Activated B cell treated with CpG ODN at 0.5 μM for 24 hours (primary cell): ENCODE measurements at regions of chr1 and their contacts with region 1.

Region 1: GRCh38 chr1:222713091-222713961 is 962 bp downstream of the BROX start:
- DNase-seq: peak; percentile 90
- ATAC-seq: peak; percentile 73
- H3K4me3 Mint-ChIP-seq: peak overlapping the region; percentile 93
- H3K27ac Mint-ChIP-seq: peak overlapping the region; percentile 100
- H3K4me1 Mint-ChIP-seq: peaks cover 54% of the 10 kb centered on the region
- H3K27me3 Mint-ChIP-seq: no peaks in the 10 kb centered on the region
- CTCF ChIP-seq: no peak

Region 2: DNA sequence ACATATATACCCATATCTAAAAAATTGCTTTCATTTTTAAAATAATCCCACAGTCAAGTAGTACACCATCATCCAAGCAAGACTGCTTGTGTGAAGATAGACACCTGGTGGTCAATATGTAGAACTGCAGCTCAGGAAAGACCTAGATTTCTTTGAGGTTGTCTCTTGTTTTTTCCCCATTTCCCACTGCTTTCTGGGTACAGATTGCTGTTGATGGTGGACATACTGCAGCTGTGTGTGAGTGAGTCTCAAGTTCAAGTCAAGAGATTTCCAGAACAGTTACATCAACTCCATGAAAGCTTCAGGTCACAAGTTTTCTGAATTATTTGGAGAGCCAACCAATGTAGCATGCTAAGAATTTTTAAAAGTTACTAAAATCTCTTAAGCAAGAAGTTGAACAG is 1277.8 kb before region 1 on chr1:
- CTCF ChIA-PET with region 1: no interaction called
- POLR2A ChIA-PET with region 1: no interaction called
- intact Hi-C with region 1: loop called (anchors 5 kb)
- DNase-seq: no peak
- ATAC-seq: peak; percentile 27
- H3K4me3 Mint-ChIP-seq: no peak overlapping the region
- H3K27ac Mint-ChIP-seq: no peak overlapping the region
- H3K4me1 Mint-ChIP-seq: peaks cover 26% of the 10 kb centered on the region
- H3K27me3 Mint-ChIP-seq: peaks cover 4% of the 10 kb centered on the region
- CTCF ChIP-seq: peak; percentile 29

Region 3: DNA sequence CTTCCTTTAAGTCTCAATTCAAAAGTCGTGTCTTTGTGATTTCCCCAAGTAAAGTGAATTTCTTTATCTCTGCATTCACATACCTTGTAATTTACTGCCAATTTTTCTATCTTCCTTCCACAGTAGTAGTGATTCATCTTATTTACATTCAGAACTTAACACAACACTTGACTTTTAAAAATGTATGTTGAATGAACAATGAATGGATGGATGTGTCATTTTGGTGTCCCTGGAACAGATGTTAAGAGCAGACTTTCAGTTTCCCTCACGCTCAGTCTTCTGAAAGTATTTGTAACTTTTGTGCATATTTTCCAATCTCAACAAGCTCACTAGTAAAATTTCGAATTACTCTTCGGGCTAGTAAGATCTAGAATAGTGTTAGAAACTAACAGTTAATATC is 517.5 kb before region 1 on chr1:
- CTCF ChIA-PET with region 1: no interaction called
- POLR2A ChIA-PET with region 1: no interaction called
- intact Hi-C with region 1: no loop called
- DNase-seq: no peak
- ATAC-seq: no peak
- H3K4me3 Mint-ChIP-seq: no peak overlapping the region
- H3K27ac Mint-ChIP-seq: no peak overlapping the region
- H3K4me1 Mint-ChIP-seq: no peaks in the 10 kb centered on the region
- H3K27me3 Mint-ChIP-seq: no peaks in the 10 kb centered on the region
- CTCF ChIP-seq: no peak

Region 4: GRCh38 chr1:222582099-222582774 is 131.1 kb before region 1 on chr1:
- CTCF ChIA-PET with region 1: no interaction called
- POLR2A ChIA-PET with region 1: no interaction called
- intact Hi-C with region 1: no loop called
- DNase-seq: no peak
- ATAC-seq: peak; percentile 49
- H3K4me3 Mint-ChIP-seq: peak overlapping the region; percentile 81
- H3K27ac Mint-ChIP-seq: peak overlapping the region; percentile 93
- H3K4me1 Mint-ChIP-seq: peaks cover 68% of the 10 kb centered on the region
- H3K27me3 Mint-ChIP-seq: no peaks in the 10 kb centered on the region
- CTCF ChIP-seq: no peak

Region 5: GRCh38 chr1:222617367-222617951 is 95.9 kb before region 1 on chr1:
- CTCF ChIA-PET with region 1: no interaction called
- POLR2A ChIA-PET with region 1: interaction called, 10 read pairs
- intact Hi-C with region 1: loop called (anchors 1 kb)
- DNase-seq: peak; percentile 80
- ATAC-seq: peak; percentile 92
- H3K4me3 Mint-ChIP-seq: peak overlapping the region; percentile 93
- H3K27ac Mint-ChIP-seq: peak overlapping the region; percentile 91
- H3K4me1 Mint-ChIP-seq: peaks cover 28% of the 10 kb centered on the region
- H3K27me3 Mint-ChIP-seq: peaks cover 20% of the 10 kb centered on the region
- CTCF ChIP-seq: no peak

Region 6: DNA sequence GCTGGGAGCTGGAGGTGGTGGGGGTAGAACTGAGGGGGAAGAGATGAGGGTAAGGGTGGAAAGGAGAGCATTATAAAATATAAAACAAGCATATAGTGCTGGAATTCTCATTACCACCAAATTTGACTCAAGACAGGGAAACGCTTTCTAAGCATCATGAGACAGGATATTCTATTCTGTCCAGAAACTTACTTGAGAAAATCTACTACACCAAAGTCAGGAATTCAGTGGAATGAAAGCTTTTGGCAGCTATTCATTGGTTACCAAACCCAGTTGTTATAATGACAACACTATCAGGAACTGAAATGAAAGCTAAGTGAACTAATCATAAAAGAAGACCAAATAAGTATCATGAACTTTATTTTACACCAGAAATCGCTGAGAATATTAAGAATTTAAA is 15.5 kb before region 1 on chr1:
- CTCF ChIA-PET with region 1: interaction called, 3 read pairs
- POLR2A ChIA-PET with region 1: interaction called, 10 read pairs
- intact Hi-C with region 1: loop called (anchors 2 kb)
- DNase-seq: no peak
- ATAC-seq: no peak
- H3K4me3 Mint-ChIP-seq: no peak overlapping the region
- H3K27ac Mint-ChIP-seq: no peak overlapping the region
- H3K4me1 Mint-ChIP-seq: peaks cover 28% of the 10 kb centered on the region
- H3K27me3 Mint-ChIP-seq: no peaks in the 10 kb centered on the region
- CTCF ChIP-seq: no peak

Region 7: GRCh38 chr1:222754366-222755139 is 41.2 kb after region 1 on chr1:
- CTCF ChIA-PET with region 1: interaction called, 3 read pairs
- POLR2A ChIA-PET with region 1: interaction called, 14 read pairs
- intact Hi-C with region 1: no loop called
- DNase-seq: no peak
- ATAC-seq: no peak
- H3K4me3 Mint-ChIP-seq: no peak overlapping the region
- H3K27ac Mint-ChIP-seq: peak overlapping the region; percentile 61
- H3K4me1 Mint-ChIP-seq: peaks cover 65% of the 10 kb centered on the region
- H3K27me3 Mint-ChIP-seq: no peaks in the 10 kb centered on the region
- CTCF ChIP-seq: no peak

Region 8: GRCh38 chr1:222814536-222815439 is 101.5 kb after region 1 on chr1 and contains the start of gene DISP1:
- CTCF ChIA-PET with region 1: no interaction called
- POLR2A ChIA-PET with region 1: interaction called, 8 read pairs
- intact Hi-C with region 1: loop called (anchors 1 kb)
- DNase-seq: peak; percentile 66
- ATAC-seq: peak; percentile 83
- H3K4me3 Mint-ChIP-seq: peak within 1 kb of the TSS; percentile 95
- H3K27ac Mint-ChIP-seq: peak within 1 kb of the TSS; percentile 95
- H3K4me1 Mint-ChIP-seq: peaks cover 43% of the 10 kb centered on the region
- H3K27me3 Mint-ChIP-seq: peaks cover 4% of the 10 kb centered on the region
- CTCF ChIP-seq: no peak
- total RNA-seq, gene DISP1: 4.5 and 5.1 TPM in 2 replicates